PC-3 (cell line): ENCODE measurements at regions of chr18 and their contacts with region 1.

Region 1: DNA sequence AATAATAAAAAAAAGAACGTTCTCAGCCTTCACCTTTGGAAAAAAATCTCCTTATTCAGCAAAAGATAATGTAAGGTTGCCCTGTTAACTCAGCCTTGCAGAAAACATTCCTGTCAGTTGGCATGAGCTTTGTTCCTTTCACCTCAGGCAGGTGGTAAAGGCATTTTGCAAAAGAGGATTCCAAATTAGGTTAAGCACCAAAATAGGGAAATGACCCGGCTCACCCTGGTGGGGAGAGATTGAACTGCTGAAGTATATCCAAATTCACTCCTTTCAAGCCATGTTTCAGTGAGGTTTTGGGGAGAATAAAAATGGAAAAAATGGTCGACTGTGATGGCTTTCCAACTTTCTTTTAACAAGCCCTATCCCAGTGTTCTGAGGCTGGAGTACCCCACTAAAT is 1988.8 kb upstream of the PIK3C3 start:
- DNase-seq: peak; percentile 26
- ATAC-seq: no peak
- H3K4me3 ChIP-seq: no peak overlapping the region
- H3K27ac ChIP-seq: no peak overlapping the region
- H3K4me1 ChIP-seq: peaks cover 9% of the 10 kb centered on the region
- H3K27me3 ChIP-seq: no peaks in the 10 kb centered on the region
- CTCF ChIP-seq: peak; percentile 46; the same call in 1 of the 2 replicates

Region 2: DNA sequence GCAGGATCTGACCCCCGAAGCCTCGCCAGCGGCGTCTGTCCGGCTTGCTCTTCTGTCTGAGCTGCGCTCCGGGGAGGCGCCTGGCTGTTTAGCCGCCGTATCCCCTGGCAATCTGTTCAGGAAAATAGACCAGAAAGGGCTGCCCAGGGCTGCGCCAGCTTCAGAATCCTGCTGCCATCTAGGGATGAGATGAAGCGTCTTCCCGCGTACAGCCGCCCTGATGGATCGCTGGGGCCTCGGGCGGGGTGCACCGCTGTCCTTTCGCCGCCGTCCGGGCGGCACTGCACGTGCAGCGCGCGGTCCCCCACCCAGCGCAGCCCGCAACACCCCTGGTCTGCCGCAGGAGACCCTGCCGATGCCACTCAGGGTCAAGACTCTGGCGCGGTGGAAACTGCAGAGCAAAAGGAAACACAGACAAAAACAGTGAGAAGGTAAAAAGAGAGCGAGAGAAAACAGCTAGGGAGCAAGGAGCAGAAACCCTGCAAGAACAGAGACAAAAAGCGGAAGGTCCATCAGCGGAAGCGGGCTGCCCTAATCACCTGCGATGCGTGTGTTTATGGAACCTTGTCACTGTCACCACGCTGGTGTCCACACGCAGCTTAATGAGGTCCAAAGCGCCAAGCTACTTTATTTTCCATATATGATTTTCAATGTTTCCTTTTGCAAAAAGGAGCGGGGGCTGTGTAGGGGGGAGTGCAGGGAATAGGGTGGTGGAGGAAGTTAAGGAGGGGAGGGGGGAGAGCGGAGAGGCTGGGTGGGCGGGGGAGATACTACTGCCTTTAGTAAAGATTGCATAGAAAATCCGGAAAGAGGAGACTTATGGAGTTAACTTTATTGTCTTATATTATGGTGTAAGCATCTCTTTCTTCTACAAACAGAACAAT is 124.6 kb before region 1 on chr18:
- CTCF ChIA-PET with region 1: no interaction called
- POLR2A ChIA-PET with region 1: no interaction called
- intact Hi-C with region 1: loop called (anchors 5 kb)
- DNase-seq: peak; percentile 35
- ATAC-seq: peak; percentile 96
- H3K4me3 ChIP-seq: peak overlapping the region; percentile 73
- H3K27ac ChIP-seq: no peak overlapping the region
- H3K4me1 ChIP-seq: no peaks in the 10 kb centered on the region
- H3K27me3 ChIP-seq: no peaks in the 10 kb centered on the region
- CTCF ChIP-seq: peak; percentile 36; the same call in 1 of the 2 replicates

Region 3: GRCh38 chr18:39935598-39935997 is 30.7 kb before region 1 on chr18:
- CTCF ChIA-PET with region 1: no interaction called
- POLR2A ChIA-PET with region 1: no interaction called
- intact Hi-C with region 1: no loop called
- DNase-seq: no peak
- ATAC-seq: no peak
- H3K4me3 ChIP-seq: no peak overlapping the region
- H3K27ac ChIP-seq: no peak overlapping the region
- H3K4me1 ChIP-seq: no peaks in the 10 kb centered on the region
- H3K27me3 ChIP-seq: no peaks in the 10 kb centered on the region
- CTCF ChIP-seq: no peak